Dendritic cell treated with granulocyte-macrophage colony-stimulating factor and Interleukin-4, amounts not matched to agents 40 ng/mL and 50 ng/mL, for 4 days (primary cell): ENCODE measurements at regions of chr9 and their contacts with region 1.

Region 1: GRCh38 chr9:98207606-98208005 is 15.2 kb upstream of the CORO2A start:
- H3K4me3 Mint-ChIP-seq: no peak overlapping the region
- H3K27ac Mint-ChIP-seq: no peak overlapping the region
- H3K4me1 Mint-ChIP-seq: peaks cover 5% of the 10 kb centered on the region
- H3K27me3 Mint-ChIP-seq: no peaks in the 10 kb centered on the region

Region 2: DNA sequence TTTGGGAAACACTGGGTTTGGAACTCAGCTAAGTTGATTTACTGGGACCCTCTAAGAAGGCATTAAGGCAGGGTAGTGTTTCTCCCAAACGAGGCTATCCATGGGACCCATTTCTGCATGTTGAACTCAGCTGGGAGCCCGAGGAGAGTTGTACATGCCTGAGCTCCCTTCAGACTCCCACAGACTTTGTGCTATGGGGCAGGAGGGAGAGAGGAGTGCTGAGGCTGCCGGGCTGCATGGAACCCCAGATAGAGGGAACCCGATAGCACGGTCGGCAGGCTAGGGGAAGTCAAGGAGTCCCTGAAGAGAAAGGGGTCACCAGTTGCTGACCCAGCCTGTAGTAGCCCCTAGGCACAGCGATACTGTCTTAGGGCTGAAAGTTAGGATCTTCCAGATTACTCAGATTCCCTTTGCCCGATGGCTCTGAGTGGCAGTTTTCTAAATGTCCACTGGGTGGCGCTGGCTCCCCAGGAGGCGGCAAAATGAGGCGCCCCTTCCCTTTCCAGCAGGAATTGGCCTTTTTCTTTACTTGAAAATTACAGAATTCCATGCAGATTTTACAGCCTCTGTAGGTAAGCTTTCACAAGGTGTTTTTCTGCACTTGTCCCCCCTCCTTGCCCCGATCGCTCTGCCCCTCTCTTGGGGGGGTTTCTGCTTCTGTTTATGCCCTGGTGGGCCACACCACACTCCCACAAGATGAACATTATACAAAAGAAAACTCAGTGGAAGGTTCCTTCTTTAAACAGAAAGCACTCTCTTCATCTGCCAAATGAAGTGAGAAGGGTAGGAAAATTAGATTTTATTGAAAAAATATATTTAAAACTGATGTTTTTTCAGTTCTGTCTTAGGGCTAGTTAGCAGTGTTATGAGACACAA is 133.3 kb before region 1 on chr9:
- intact Hi-C with region 1: loop called (anchors 10 kb)
- H3K4me3 Mint-ChIP-seq: no peak overlapping the region
- H3K27ac Mint-ChIP-seq: peak overlapping the region; percentile 63
- H3K4me1 Mint-ChIP-seq: peaks cover 40% of the 10 kb centered on the region
- H3K27me3 Mint-ChIP-seq: no peaks in the 10 kb centered on the region

Region 3: DNA sequence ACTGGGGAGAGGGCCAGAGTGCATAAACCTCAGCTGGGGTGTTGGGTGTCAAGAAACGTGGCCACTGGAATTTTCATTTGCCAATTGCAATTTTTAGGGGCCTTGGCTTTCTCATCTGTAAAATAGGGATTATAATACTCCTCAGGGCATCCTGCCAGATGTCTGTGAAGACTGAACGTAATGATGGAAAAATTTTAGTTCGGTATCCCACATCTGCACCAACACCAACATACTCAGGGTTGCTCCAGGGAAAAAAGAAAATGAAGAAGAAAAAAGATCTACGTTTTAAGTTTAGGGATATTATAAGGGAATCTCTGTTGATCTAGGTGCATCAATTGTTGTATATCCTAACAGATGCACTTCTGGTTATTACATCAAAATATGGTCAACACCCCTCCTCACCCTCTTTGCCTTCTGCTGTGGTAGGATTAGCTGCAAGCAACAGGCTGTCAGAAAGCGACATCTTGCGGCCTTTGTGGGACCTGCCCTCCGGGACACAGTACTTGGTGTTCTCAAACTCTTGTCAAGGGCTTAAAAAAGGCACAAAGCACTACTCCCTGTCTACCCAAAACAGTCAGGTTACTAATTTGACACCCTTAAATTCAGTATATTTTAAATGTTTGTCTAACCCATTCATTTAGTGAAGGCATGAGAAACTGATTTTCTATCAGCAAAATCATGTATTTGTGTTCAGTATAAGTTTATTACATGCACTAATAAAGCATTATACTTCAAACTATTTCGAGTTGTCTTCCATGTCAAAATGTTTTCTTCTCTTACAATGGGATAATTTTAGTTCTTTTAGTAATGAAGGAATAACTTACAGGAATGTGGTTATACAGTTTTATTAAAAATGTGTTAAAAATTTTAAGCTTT is 56.1 kb after region 1 on chr9:
- intact Hi-C with region 1: loop called (anchors 1 kb)
- H3K4me3 Mint-ChIP-seq: no peak overlapping the region
- H3K27ac Mint-ChIP-seq: no peak overlapping the region
- H3K4me1 Mint-ChIP-seq: no peaks in the 10 kb centered on the region
- H3K27me3 Mint-ChIP-seq: peaks cover 3% of the 10 kb centered on the region

Region 4: DNA sequence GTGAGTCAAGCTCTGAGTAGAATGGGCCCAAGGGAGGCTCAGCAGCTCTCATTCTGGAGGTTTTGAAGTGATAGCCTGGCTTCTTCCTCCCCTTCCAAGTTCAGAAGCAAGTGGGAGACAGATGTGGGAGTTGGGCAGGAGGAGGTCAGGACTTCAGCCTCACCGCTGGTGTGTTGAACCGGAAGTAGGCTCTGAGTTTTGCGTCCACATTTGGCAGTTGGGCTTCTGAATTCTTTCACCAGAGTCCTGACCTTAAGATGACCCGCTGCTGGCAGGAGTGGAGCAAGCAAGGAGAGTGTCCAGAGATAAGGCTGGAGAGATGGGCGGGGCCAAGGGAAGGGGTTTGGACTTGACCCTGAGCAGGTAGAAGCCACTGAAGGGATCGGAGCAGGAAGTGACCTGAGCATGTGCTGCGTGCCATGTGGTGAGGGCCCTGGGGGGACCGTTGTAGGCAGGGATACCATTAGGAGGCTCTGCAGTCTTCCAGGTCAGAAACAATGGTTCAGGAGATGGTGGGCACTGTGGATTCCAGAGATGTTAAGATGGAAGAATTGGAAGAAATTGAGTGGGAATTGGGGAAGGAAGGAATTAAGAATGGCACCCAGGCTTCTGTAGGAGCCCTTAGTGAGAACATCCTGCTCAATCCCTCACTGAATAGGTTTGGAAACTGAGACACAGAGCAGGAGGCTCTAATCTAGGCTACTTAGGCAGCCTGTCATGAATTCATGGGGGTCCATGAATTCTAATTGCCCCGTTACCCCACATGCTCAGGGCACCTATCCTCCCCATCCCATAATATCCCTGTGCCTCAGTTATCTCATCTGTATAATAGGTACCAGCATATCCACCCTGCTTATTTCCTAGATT is 625.7 kb after region 1 on chr9:
- intact Hi-C with region 1: no loop called
- H3K4me3 Mint-ChIP-seq: no peak overlapping the region
- H3K27ac Mint-ChIP-seq: no peak overlapping the region
- H3K4me1 Mint-ChIP-seq: peaks cover 53% of the 10 kb centered on the region
- H3K27me3 Mint-ChIP-seq: peaks cover 2% of the 10 kb centered on the region